ENCODE measurements at regions of chr22 and their contacts with region 1.

Region 1: GRCh38 chr22:23888615-23889401 is 5.4 kb upstream of the MIF start:
- DNase-seq: no peak
- ATAC-seq: peak; percentile 48
- H3K4me3 ChIP-seq: no peak overlapping the region
- H3K27ac ChIP-seq: no peak overlapping the region
- H3K4me1 ChIP-seq: peaks cover 5% of the 10 kb centered on the region; the same call in 1 of the 2 replicates
- H3K27me3 ChIP-seq: no peaks in the 10 kb centered on the region
- CTCF ChIP-seq: peak; percentile 11

Region 2: DNA sequence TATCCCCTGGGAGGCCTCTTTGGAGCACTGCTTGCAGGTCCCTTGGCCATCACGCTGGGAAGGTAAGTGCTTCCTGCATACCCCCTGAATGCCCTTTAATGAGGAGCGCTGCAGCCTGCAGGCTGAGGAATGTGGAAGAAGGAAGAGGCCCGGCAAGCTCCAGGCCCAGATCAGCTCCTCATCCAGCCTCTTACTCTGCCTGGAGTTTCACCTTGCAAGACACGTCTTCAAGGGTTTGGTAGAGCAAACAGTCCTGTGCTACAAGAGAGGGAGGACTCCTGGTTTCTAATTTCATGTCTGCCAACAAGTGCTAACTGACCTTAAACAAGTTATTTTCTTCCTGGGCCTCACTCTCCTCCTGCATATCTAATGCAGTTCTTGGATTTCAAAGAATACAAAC is 20.2 kb before region 1 on chr22:
- CTCF ChIA-PET with region 1: interaction called, 14 read pairs
- POLR2A ChIA-PET with region 1: interaction called, 5 read pairs
- in situ Hi-C with region 1: no loop called
- intact Hi-C with region 1: no loop called
- DNase-seq: no peak
- ATAC-seq: no peak
- H3K4me3 ChIP-seq: no peak overlapping the region
- H3K27ac ChIP-seq: no peak overlapping the region
- H3K4me1 ChIP-seq: no peaks in the 10 kb centered on the region
- H3K27me3 ChIP-seq: no peaks in the 10 kb centered on the region
- CTCF ChIP-seq: no peak

Region 3: GRCh38 chr22:24006207-24006913 is 117.6 kb after region 1 on chr22:
- CTCF ChIA-PET with region 1: no interaction called
- POLR2A ChIA-PET with region 1: interaction called, 10 read pairs
- in situ Hi-C with region 1: no loop called
- intact Hi-C with region 1: no loop called
- DNase-seq: no peak
- ATAC-seq: no peak
- H3K4me3 ChIP-seq: no peak overlapping the region
- H3K27ac ChIP-seq: no peak overlapping the region
- H3K4me1 ChIP-seq: no peaks in the 10 kb centered on the region
- H3K27me3 ChIP-seq: no peaks in the 10 kb centered on the region
- CTCF ChIP-seq: no peak

Region 4: DNA sequence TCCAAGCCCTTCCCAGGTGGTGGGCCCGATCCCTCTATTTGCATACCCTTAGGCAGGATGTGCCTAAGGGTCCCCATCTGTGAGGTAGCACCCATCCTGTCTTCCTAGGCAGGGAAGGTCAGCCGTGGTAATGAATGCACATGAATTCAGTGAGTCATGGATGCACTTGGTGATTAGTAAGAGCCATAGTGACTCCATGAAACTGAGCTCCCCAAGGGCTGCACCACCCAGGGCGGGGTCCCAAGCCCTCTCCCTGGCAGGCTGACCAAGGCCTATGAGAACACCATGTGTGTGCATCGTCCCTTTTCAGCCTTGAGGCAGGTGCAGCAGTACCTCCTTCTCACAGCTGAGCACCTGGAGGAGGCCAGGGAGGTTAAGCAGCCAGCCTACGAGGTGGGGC is 276.9 kb after region 1 on chr22:
- CTCF ChIA-PET with region 1: interaction called, 13 read pairs
- POLR2A ChIA-PET with region 1: no interaction called
- in situ Hi-C with region 1: no loop called
- intact Hi-C with region 1: no loop called
- DNase-seq: no peak
- ATAC-seq: no peak
- H3K4me3 ChIP-seq: no peak overlapping the region
- H3K27ac ChIP-seq: no peak overlapping the region
- H3K4me1 ChIP-seq: no peaks in the 10 kb centered on the region
- H3K27me3 ChIP-seq: no peaks in the 10 kb centered on the region
- CTCF ChIP-seq: no peak

Region 5: DNA sequence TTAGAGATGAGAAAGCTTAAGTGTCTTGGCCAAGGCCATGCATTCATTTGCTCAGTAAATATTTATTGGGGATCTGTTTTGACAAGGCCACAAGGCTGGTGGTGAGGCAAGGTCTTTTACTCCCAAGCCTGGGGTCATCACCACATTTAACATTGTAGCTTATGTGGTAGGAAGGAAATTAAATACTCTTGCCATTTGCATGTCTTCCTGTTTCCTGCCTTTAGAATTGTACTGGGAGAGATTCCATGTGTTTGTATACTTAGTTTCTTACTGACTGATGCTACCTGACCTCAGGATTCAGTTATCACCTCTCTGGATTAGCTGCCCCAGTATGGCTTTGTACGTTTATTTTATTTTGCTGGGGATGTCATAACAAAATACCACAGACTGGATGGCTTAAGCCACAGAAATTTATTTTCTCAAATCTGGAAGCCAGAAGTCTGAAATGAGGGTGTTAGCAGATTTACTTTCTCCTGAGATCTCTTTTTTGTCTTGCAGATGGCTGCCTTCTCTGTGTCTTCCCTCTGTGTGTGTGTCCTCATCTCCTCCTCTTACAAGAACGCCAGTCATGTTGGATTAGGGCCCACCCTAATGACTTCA is 426.7 kb after region 1 on chr22:
- CTCF ChIA-PET with region 1: interaction called, 14 read pairs
- POLR2A ChIA-PET with region 1: no interaction called
- in situ Hi-C with region 1: no loop called
- intact Hi-C with region 1: no loop called
- DNase-seq: no peak
- ATAC-seq: no peak
- H3K4me3 ChIP-seq: no peak overlapping the region
- H3K27ac ChIP-seq: no peak overlapping the region
- H3K4me1 ChIP-seq: no peaks in the 10 kb centered on the region; the same call in 1 of the 2 replicates
- H3K27me3 ChIP-seq: no peaks in the 10 kb centered on the region
- CTCF ChIP-seq: no peak

Measured in Panc1 (cell line).